A549 (cell line): ENCODE measurements at regions of chr12 and their contacts with region 1.

Region 1: DNA sequence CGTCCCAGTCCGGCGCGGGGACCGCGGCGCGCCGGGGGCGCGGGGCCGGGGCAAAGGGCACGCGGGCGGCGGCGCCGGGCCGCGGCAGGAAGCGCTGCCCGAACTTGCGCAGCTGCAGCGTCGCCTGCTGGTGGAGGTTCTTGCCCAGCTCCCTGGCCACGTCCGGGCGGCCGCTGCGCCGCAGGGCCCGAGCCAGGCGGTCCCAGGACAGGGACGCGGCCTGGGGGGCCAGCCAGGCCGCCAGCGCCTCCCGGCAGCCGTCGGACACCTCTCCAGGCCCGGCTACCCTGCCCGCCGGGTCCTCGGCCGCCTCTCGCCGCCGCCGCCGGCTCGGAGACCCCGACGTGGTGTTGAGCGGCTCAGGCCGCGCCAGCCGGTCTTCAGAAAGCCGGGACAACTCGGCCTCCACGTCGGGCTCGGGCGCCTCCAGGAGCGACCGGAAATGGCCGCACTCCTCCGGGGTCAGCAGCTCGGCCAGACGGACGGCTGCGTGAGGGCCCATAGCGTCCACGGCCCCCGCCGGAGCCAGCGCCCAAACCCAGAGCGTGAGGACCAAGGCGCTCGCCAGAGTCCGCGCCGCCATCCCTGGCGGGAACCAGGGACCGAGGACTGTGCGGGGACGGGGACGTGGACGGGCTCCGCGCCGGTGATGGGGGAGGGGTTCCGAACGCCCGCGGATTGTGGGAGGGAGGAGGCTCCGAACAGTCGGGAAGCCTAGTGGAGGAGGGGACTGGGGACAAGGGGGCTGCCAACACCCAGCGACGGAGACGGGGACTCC is 34.0 kb downstream of the FIGNL2 start:
- DNase-seq: peak; percentile 82 to 86
- ATAC-seq: peak; percentile 88 to 90
- H3K4me3 ChIP-seq: peak overlapping the region; percentile 46
- H3K27ac ChIP-seq: peak overlapping the region; percentile 80 to 97
- H3K4me1 ChIP-seq: peaks cover 23% of the 10 kb centered on the region
- CTCF ChIP-seq: peak; percentile 93
- EP300 ChIP-seq: no peak
- POLR2A ChIP-seq: peak; percentile 38
- RAD21 ChIP-seq: peak; percentile 53 to 77

Region 2: DNA sequence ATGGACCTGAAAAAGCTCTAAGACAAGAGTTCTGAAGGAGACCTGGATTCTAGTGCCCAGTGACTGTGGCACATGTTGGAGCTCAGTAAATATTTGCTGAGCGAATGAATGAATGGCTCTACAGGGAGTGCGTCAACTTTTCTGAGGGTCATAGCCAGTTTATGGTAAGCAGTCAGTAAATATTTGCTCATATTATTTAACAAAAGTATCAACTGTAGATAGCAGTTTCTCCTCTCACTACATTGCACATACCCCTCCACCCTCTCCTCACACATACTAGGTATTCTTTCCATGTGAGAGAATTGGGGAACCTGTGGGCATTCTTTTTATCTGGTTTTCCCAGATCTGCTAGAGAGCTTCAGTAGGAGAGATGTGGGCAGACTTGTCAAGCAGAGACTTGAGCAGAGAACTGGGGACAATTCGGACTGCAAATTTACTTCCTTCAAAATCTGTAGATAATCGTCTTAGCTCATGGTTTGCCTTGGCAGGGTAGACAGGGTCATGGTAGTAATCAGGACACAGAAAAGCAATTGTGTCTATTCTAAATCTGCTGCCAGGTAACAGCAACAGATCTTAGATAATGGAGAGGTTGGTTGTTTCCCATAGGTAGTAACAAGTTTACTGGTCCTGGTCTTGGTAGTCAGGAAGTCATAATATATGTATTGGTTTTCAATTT is 384.1 kb before region 1 on chr12:
- CTCF ChIA-PET with region 1: interaction called, 12 read pairs
- POLR2A ChIA-PET with region 1: no interaction called
- DNase-seq: peak in 1 of 2 experiments; percentile 36
- ATAC-seq: peak in 1 of 2 experiments; percentile 41; a peak in 3 of 6 replicates
- H3K4me3 ChIP-seq: no peak overlapping the region
- H3K27ac ChIP-seq: no peak overlapping the region
- H3K4me1 ChIP-seq: 0 out of 3 replicates have a peak, but pooled peaks cover 7% of the 10 kb centered on the region
- CTCF ChIP-seq: no peak
- EP300 ChIP-seq: no peak
- POLR2A ChIP-seq: no peak
- RAD21 ChIP-seq: no peak

Region 3: DNA sequence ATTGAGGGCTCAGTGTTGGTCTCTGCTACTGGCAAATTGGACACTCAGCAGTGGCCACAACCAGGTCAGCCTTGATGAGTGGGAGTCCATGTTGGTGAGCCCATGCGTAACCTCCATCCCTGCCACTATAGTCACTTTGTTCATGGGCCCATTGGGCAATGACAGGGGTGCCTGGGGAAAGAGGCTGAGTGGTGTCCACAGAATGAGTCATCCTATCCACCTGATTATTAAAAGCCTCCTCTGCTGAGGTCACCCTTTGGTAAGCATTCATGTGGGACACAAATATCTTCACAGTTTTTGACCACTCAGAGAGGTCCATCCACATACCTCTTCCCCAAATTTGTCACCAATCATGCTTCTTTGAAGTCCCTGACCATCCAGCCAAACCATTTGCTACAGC is 16.0 kb before region 1 on chr12:
- CTCF ChIA-PET with region 1: interaction called, 37 read pairs
- POLR2A ChIA-PET with region 1: interaction called, 4 read pairs
- DNase-seq: no peak
- ATAC-seq: no peak
- H3K4me3 ChIP-seq: no peak overlapping the region
- H3K27ac ChIP-seq: no peak overlapping the region
- H3K4me1 ChIP-seq: no peaks in the 10 kb centered on the region
- CTCF ChIP-seq: no peak
- EP300 ChIP-seq: no peak
- POLR2A ChIP-seq: no peak
- RAD21 ChIP-seq: no peak